ENCODE measurements at regions of chr4 and their contacts with region 1.

Region 1: DNA sequence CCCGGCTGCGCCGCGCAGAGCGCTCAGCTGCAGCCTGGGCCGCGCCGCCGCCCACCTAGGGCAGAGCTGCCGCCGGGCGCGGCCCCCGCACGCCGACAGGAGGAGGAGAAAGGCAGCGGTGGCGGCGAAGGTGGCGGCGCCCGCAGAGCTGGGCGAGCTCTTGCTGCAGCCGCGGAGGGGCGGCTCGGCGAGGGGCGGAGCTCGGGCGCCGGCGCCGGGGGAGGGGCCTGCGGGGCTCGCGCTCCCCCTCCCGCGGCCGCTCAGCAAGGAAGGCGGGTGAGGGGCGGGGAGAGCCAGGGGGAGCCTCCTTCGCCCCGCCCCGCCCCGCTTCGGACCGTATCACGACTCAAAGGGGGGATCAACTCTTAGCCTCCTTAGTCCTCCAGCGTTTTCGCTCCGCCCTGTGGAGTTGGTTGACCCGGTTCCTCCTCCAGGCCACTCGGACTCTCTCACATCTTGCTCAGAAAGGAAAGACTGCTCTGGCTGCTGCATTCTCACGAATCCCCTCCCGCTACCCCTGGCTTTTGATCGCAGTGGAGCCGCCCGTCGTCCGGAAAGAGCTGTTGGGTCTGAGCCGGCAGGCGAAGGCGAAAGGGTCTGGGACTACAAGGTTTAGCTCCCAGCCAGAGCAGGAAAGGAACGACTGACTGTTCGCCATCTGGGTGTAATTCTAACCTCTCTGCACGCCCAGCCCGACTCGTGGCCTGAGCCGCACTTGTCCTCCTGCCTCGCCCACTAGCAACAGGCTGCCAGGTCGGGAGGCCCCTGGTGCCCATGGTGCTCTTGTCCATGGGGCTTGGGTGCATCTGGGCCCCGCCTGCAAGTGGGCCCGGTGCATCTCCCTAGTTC is at the start of gene ATP8A1:
- DNase-seq: peak; percentile 88
- H3K4me3 Mint-ChIP-seq: peak within 1 kb of the TSS; percentile 93
- H3K27ac Mint-ChIP-seq: peak within 1 kb of the TSS; percentile 95
- H3K4me1 Mint-ChIP-seq: peaks cover 43% of the 10 kb centered on the region
- H3K27me3 Mint-ChIP-seq: peaks cover 4% of the 10 kb centered on the region
- total RNA-seq, gene ATP8A1: 14.6 and 19.7 TPM in 2 replicates

Region 2: DNA sequence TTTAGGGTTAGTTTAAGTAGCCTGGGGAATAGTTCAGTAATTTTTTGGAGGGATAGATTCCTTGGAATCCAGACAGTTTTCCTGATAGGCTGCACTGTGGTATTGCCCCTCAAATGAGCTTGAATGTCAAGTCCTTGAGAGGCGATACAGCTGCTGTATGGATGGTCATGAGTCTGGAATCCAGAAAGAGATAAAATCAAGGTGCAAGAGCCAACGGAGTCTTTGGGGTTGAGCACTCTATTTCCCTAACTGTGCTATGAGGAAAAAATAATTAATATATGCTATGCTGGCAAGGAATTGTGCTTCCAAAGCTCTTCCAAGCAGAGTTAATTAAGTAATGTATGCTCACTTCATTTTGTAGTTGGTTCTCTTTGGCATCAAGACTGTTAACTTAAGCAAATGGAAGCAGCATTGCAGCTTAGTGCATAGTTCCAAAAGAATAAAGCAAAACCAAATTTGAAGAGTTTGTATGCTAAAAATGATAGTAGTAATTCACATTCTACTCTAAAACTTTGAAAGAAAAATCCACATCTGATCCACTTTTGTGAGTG is 1070.4 kb before region 1 on chr4:
- intact Hi-C with region 1: no loop called
- DNase-seq: no peak
- H3K4me3 Mint-ChIP-seq: no peak overlapping the region
- H3K27ac Mint-ChIP-seq: no peak overlapping the region
- H3K4me1 Mint-ChIP-seq: no peaks in the 10 kb centered on the region
- H3K27me3 Mint-ChIP-seq: no peaks in the 10 kb centered on the region

Region 3: GRCh38 chr4:42396752-42397634 is 260.2 kb before region 1 on chr4 and contains the start of gene SHISA3:
- intact Hi-C with region 1: loop called (anchors 5 kb)
- DNase-seq: peak; percentile 20
- H3K4me3 Mint-ChIP-seq: peak within 1 kb of the TSS; percentile 79
- H3K27ac Mint-ChIP-seq: no peak within 1 kb of the TSS
- H3K4me1 Mint-ChIP-seq: peaks cover 15% of the 10 kb centered on the region
- H3K27me3 Mint-ChIP-seq: peaks cover 65% of the 10 kb centered on the region
- total RNA-seq, gene SHISA3: 0.80 and 1.2 TPM in 2 replicates

Region 4: DNA sequence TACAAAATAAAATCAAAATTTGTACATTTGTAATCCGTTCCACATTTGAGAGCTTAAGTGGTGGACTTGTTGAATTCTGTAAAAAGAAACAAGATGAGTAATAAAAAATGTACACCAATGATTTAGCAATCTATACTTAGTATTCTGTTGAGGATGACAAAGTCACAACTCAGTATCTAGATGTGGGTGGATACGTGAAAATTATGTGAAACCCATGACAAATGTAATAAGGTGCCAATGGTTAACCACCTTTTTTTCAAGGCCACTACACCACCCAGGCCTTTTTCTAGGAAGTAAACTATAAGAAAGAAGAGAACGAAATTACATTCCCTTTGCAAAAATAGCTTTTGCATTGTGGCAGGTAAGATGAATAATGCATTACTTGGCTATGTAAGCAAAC is 77.3 kb before region 1 on chr4:
- intact Hi-C with region 1: loop called (anchors 1 kb)
- DNase-seq: no peak
- H3K4me3 Mint-ChIP-seq: no peak overlapping the region
- H3K27ac Mint-ChIP-seq: peak overlapping the region; percentile 38
- H3K4me1 Mint-ChIP-seq: peaks cover 15% of the 10 kb centered on the region
- H3K27me3 Mint-ChIP-seq: no peaks in the 10 kb centered on the region

Region 5: GRCh38 chr4:42627885-42628646 is 29.1 kb before region 1 on chr4:
- intact Hi-C with region 1: loop called (anchors 2 kb)
- DNase-seq: no peak
- H3K4me3 Mint-ChIP-seq: no peak overlapping the region
- H3K27ac Mint-ChIP-seq: peak overlapping the region; percentile 75
- H3K4me1 Mint-ChIP-seq: peaks cover 26% of the 10 kb centered on the region
- H3K27me3 Mint-ChIP-seq: no peaks in the 10 kb centered on the region

Region 6: GRCh38 chr4:42673082-42673425 is 15.9 kb after region 1 on chr4:
- intact Hi-C with region 1: loop called (anchors 1 kb)
- DNase-seq: no peak
- H3K4me3 Mint-ChIP-seq: no peak overlapping the region
- H3K27ac Mint-ChIP-seq: peak overlapping the region; percentile 69
- H3K4me1 Mint-ChIP-seq: peaks cover 30% of the 10 kb centered on the region
- H3K27me3 Mint-ChIP-seq: no peaks in the 10 kb centered on the region